ENCODE measurements at regions of chr14 and their contacts with region 1.

Region 1: DNA sequence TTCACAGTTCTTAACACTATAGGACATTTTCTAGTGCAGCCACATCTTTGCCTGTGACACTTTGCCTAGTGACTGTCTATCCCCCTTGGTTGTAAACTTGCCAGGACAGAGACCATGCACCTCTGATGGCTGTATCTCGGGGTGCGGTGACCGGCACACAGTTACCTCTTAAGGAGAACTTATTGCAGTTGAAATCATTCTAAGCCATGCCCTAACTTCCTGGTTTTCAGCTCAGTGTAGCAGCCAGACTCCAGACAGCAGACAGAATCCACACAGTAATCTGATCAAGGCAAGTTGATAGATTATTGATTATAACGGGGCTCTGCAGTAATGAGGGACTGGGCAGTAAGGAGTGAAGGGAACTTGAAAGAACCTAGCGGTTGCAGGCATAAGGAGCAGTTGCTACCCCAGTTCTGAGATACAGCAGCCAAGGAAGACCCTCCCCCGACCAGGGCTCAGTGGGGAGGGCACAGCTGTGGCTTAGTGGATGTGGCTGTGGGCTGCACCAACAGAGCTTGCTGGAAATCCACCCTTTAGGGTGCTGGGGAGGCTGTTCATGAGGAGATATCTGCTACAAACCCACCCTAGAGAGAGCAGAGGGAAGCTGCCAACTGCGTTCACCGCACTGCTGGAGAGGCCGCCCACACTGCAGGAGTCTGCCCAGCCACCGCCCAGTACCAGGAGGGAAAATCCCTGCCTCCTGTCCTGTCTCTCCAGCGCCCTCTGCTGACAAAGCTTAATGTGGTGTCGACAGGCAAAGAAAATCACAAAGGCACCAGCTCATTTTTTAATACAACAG is 58.2 kb upstream of the BEGAIN start:
- DNase-seq: no peak
- H3K4me3 ChIP-seq: no peak overlapping the region
- CTCF ChIP-seq: peak; percentile 87

Region 2: GRCh38 chr14:100392356-100392755 is 253.0 kb before region 1 on chr14:
- CTCF ChIA-PET with region 1: interaction called, 497 read pairs
- POLR2A ChIA-PET with region 1: no interaction called
- DNase-seq: no peak
- H3K4me3 ChIP-seq: no peak overlapping the region; the same call in 1 of the 2 replicates
- CTCF ChIP-seq: no peak

Region 3: DNA sequence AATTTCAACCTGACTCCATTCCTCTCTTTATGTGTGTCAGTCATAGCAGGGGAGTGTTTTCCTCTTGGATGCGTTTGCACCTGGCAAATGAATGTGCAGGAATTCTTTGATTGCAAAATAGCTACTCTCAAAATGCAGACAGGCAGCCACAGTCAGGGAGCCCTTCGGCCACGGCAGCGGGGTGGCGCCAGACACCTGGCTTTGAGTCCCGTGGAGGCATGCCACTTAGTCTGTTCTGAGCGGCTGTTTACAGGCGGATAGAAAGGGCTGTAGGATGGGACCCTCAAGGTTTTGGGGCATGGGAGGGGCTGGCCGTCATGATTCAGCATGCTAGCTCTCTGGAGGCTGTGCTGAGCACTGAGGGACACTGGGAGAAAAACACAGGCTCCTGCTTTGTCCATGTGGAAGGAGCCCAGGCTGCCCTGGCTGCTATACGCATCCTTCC is 205.2 kb before region 1 on chr14:
- CTCF ChIA-PET with region 1: interaction called, 21 read pairs
- POLR2A ChIA-PET with region 1: no interaction called
- DNase-seq: no peak
- H3K4me3 ChIP-seq: no peak overlapping the region
- CTCF ChIP-seq: peak; percentile 73

Region 4: DNA sequence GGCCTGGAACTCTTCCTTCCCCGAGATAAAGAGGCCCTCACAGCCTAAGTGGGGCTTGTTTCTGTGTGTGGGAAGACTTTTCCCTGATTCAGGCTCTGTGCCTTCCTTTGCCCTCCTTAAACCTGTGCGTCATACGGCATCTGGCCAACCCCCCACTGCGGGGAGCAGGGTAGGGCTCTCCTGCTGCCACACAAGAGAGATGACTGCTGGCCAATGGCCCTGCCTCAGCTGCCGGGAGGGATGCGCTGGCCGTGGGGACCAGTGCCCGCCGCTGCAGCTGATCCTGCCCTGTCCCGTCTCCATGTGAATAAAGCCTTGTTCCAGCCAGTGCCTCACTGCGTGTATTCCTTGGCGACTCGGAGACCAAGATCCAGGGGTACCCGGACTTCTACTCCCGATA is 15.7 kb before region 1 on chr14:
- CTCF ChIA-PET with region 1: interaction called, 23 read pairs
- POLR2A ChIA-PET with region 1: no interaction called
- DNase-seq: no peak
- H3K4me3 ChIP-seq: no peak overlapping the region
- CTCF ChIP-seq: no peak

Region 5: GRCh38 chr14:100662879-100663760 is 17.7 kb after region 1 on chr14:
- CTCF ChIA-PET with region 1: interaction called, 140 read pairs
- POLR2A ChIA-PET with region 1: no interaction called
- DNase-seq: no peak
- H3K4me3 ChIP-seq: no peak overlapping the region
- CTCF ChIP-seq: peak; percentile 84